ENCODE measurements at regions of chr14 and their contacts with region 1.

Region 1: GRCh38 chr14:101635749-101636560 is 74.7 kb downstream of the DIO3 start:
- DNase-seq: no peak
- H3K4me3 ChIP-seq: no peak overlapping the region
- H3K27ac ChIP-seq: no peak overlapping the region
- H3K4me1 ChIP-seq: no peaks in the 10 kb centered on the region
- H3K27me3 ChIP-seq: no peaks in the 10 kb centered on the region
- CTCF ChIP-seq: 0 out of 2 replicates have a peak, but pooled peaks have one; percentile 7

Region 2: DNA sequence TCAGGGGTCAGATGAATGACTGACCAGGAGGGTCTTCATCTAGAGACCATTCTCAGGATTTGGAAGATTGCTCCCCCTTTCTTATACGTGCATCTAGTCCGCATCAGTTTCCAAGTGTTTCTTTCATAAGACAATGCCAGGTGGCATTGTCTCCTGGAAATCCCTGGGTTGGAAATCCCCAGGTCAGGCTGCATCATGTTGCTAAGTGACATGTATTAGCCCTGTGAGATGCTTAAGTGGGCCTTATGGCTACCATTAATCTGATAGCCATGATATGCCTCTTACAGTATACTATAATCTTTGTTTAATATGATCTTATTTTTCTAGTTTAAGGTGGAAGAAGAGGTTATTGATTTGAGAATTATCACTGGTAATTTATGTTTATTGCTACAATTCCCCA is 18.1 kb after region 1 on chr14:
- CTCF ChIA-PET with region 1: no interaction called
- POLR2A ChIA-PET with region 1: no interaction called
- intact Hi-C with region 1: no loop called
- DNase-seq: no peak
- H3K4me3 ChIP-seq: no peak overlapping the region
- H3K27ac ChIP-seq: no peak overlapping the region
- H3K4me1 ChIP-seq: no peaks in the 10 kb centered on the region; the same call in 1 of the 2 replicates
- H3K27me3 ChIP-seq: no peaks in the 10 kb centered on the region
- CTCF ChIP-seq: no peak

Region 3: GRCh38 chr14:102316743-102317563 is 681.0 kb after region 1 on chr14:
- CTCF ChIA-PET with region 1: no interaction called
- POLR2A ChIA-PET with region 1: no interaction called
- intact Hi-C with region 1: no loop called
- DNase-seq: peak; percentile 85 to 91
- H3K4me3 ChIP-seq: peak overlapping the region; percentile 69
- H3K27ac ChIP-seq: peak overlapping the region; percentile 69
- H3K4me1 ChIP-seq: peaks cover 42% of the 10 kb centered on the region
- H3K27me3 ChIP-seq: no peaks in the 10 kb centered on the region
- CTCF ChIP-seq: peak; percentile 43

Region 4: GRCh38 chr14:102474934-102475333 is 839.0 kb after region 1 on chr14:
- CTCF ChIA-PET with region 1: no interaction called
- POLR2A ChIA-PET with region 1: no interaction called
- intact Hi-C with region 1: no loop called
- DNase-seq: no peak
- H3K4me3 ChIP-seq: no peak overlapping the region
- H3K27ac ChIP-seq: no peak overlapping the region
- H3K4me1 ChIP-seq: peaks cover 4% of the 10 kb centered on the region
- H3K27me3 ChIP-seq: no peaks in the 10 kb centered on the region
- CTCF ChIP-seq: no peak

Region 5: DNA sequence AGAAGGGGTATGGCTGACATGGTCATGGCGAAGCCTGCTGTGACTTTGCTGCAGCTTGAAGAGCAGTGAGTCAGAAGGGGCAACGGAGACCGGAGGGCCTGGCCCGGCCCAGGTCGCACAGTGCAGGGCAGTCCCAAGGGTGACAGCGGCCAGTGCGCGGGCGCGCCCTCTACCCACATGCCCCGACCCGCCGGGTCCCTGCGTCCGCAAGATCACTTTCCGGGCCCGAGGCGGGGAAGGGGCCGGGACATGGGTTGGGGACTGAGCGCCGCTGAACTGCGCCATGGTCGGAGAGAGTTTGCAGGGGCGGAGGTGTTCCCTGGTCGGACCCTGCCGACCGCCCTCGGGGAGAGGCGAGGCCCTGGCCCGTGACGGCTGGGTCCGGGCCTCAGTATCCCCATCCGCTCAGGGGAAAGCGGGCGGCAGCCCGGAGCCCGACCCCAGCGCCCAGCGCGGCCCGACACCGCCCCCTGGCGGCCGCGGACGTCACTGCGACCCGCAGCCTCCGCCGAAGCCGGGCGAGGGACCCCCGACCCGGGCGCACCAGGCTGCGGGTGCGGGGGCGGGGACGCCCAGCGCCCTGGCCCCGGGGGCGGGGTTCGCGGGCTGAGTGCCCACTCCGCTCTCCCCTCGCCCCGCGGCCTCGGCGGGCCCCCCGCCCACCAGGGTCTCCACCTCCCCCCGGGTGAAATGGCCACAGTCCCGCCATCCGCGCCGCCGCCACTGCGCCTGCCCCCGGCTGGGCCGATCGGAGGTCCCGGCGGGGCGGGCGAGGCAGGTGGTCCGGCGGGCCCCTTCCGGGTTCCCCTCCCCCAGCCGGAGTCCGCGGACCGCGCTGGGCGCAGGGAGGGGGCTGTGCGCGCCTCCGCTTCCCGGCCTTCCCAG is 880.8 kb after region 1 on chr14:
- CTCF ChIA-PET with region 1: interaction called, 10 read pairs
- POLR2A ChIA-PET with region 1: no interaction called
- intact Hi-C with region 1: no loop called
- DNase-seq: peak; percentile 55 to 72
- H3K4me3 ChIP-seq: peak overlapping the region; percentile 73
- H3K27ac ChIP-seq: no peak overlapping the region
- H3K4me1 ChIP-seq: peaks cover 7% of the 10 kb centered on the region
- H3K27me3 ChIP-seq: no peaks in the 10 kb centered on the region
- CTCF ChIP-seq: peak; percentile 89

Measured in PC-9 (cell line).